ENCODE measurements at regions of chr17 and their contacts with region 1.

Region 1: GRCh38 chr17:53574038-53574437 is 248.7 kb upstream of the KIF2B start:
- DNase-seq: no peak
- H3K4me3 ChIP-seq: no peak overlapping the region
- H3K4me3 Mint-ChIP-seq: no peak overlapping the region
- H3K27ac ChIP-seq: no peak overlapping the region
- H3K27ac Mint-ChIP-seq: no peak overlapping the region
- H3K4me1 ChIP-seq: no peaks in the 10 kb centered on the region
- H3K4me1 Mint-ChIP-seq: peaks cover 0 to 11% (median 3%) of the 10 kb centered on the region in 4 donors
- H3K27me3 ChIP-seq: no peaks in the 10 kb centered on the region
- H3K27me3 Mint-ChIP-seq: no peaks in the 10 kb centered on the region

Region 2: GRCh38 chr17:53588317-53588716 is 14.3 kb after region 1 on chr17:
- CTCF ChIA-PET with region 1: no interaction called
- POLR2A ChIA-PET with region 1: no interaction called
- intact Hi-C with region 1: loop called (anchors 2 kb)
- DNase-seq: no peak
- H3K4me3 ChIP-seq: no peak overlapping the region
- H3K4me3 Mint-ChIP-seq: no peak overlapping the region
- H3K27ac ChIP-seq: no peak overlapping the region
- H3K27ac Mint-ChIP-seq: no peak overlapping the region
- H3K4me1 ChIP-seq: no peaks in the 10 kb centered on the region
- H3K4me1 Mint-ChIP-seq: no peaks in the 10 kb centered on the region
- H3K27me3 ChIP-seq: no peaks in the 10 kb centered on the region
- H3K27me3 Mint-ChIP-seq: no peaks in the 10 kb centered on the region

Region 3: DNA sequence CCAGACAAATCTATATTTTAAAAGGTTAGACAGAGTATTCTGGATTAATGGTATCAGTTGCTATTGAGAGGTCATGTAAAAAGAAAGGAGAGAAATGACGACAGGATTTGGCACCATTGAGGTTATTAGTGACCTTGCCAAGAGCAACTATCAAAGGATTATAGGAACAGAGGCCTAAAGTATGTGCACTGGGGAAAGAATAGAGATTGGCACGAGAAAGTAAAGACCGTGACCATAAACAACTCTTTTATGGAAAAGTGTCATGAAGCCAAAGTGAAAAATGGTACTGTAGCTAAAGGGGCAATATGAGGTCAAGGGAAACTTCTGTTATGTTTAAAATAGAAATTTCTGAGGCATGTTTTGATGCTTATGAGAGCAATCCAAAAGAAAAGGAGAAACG is 133.5 kb after region 1 on chr17:
- CTCF ChIA-PET with region 1: no interaction called
- POLR2A ChIA-PET with region 1: no interaction called
- intact Hi-C with region 1: no loop called
- DNase-seq: no peak
- H3K4me3 ChIP-seq: no peak overlapping the region
- H3K4me3 Mint-ChIP-seq: no peak overlapping the region
- H3K27ac ChIP-seq: no peak overlapping the region
- H3K27ac Mint-ChIP-seq: no peak overlapping the region
- H3K4me1 ChIP-seq: no peaks in the 10 kb centered on the region
- H3K4me1 Mint-ChIP-seq: no peaks in the 10 kb centered on the region
- H3K27me3 ChIP-seq: no peaks in the 10 kb centered on the region
- H3K27me3 Mint-ChIP-seq: no peaks in the 10 kb centered on the region

Measured in CD4-positive, alpha-beta memory T cell (primary cell).